ENCODE measurements at regions of chr6 and their contacts with region 1.

Region 1: DNA sequence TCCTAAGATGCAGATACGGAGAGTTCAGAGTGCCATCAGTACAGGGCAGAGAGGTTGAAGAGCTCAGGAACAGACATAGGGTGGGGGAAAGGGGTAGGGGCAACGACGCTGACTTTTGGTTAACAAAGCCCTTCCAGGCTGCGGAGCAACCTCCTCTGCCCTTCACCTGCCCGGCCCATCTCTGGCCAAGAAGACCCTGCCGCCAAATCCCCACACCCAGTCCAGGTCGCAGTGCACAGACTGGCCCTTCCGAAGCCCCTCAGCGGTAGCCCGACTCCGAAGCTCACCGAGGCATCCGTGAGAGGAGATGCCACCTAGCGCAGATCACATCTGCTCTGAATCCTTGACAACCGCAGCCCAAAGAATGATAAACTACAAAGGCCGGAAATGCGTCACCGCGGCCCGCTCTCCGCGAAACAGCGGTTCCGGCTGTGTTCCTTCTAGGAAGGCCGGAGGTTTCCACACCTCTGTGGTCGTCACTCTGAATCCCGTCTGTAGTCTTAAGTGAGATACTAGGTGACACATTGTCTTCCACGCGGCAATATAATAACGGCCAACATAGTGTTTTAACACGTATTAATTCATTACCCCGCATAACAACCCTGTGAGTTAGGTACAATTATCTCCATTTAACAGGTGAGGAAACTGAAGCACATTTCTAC is at the start of gene ZSCAN23:
- DNase-seq: peak; percentile 80
- total RNA-seq, gene ZSCAN23: 1.6 TPM

Region 2: DNA sequence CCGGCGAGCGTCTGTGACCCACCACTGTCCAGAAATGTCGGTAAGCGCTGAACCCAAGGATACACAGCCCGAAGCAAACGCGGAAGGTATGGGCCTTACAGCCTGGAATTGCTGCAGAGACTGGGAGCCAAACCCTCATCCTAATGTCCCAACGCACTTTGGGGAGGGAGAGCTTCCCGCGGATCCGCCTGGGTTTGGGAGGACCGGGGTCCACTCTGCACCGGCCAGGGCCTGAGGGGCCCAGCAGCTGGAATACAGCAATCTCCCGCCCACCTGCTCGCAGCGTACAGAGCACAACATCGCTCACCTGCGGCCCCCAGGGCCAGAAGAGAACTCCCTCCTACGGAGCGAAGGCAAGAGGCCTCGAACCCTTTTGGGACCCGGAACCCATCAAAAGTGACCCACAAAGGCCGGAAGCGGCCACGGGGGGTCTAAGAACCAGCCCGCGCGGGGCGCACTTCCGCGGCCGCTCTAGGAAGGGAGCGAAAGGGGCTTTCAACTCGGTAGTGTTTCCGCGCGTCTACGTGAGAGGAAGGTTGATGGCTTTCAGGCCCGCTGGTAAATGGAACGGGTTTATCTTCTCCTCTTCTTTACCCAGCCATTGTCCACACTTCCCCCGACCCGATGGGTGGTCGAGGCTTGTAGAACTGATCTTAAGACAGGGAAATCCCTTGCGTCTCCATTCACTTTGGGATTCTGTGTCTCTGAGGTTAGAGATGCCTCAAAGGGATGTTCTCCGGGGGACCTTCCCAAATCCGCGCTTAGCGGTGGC is 43.7 kb before region 1 on chr6 and contains the start of gene ZSCAN12:
- intact Hi-C with region 1: loop called (anchors 2 kb)
- DNase-seq: peak; percentile 79
- total RNA-seq, gene ZSCAN12: 3.1 TPM

Region 3: GRCh38 chr6:28542440-28543296 is 99.4 kb after region 1 on chr6:
- intact Hi-C with region 1: no loop called
- DNase-seq: no peak

Measured in cardiac septum (tissue), 1 donor.